CD8-positive, alpha-beta T cell (primary cell): ENCODE measurements at regions of chr10 and their contacts with region 1.

Region 1: DNA sequence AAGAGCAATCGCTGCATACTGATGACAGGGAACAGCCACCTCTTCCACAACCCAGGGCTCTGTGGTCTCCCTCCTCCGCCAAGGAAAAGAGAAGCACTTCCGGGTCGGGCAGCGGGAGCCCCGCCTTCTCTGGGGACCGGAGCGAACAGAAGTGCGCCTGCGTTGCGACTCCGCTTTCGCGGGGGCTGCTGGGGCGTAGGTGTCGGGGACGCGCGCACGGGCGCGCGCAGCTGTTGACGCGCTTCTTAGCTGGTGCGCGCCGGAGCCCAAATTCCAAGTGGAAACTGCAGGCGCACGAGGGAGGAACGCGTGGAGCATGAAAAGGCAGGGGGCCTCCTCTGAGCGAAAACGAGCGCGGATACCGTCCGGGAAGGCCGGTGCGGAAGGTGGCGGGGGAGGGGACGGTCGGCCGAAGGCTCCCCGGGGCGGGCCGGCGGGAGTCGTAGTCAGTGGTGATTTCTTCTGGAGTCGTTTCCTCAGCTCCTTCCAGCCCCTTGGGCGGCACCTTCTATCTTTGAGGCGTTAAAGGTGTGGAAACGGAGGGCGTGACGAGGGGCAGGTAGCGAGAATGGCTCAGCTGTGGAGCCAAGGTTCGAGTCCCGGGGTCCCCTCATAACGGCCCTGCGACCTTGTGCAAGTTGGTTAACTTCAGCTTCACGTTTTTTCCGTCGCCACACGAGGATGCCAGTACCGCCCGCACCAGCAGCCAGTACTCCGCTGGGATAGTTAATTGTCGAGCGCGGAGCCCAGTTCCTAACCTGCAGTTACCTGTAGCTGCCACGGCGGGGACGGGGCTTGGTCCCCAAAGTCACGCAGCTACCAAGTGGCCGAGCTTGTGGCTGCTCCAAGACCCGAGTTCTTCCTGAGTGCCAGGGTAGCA is at the starts of genes COX15 and CUTC:
- DNase-seq: peak; percentile 89 to 98 (median 95)
- ATAC-seq: peak; percentile 89
- H3K4me3 ChIP-seq: peak within 1 kb of the TSS; percentile 85 to 96
- H3K4me3 Mint-ChIP-seq: peak within 1 kb of the TSS; percentile 100
- H3K27ac ChIP-seq: peak within 1 kb of the TSS; percentile 85 to 92
- H3K27ac Mint-ChIP-seq: peak within 1 kb of the TSS; percentile 99
- H3K4me1 ChIP-seq: peaks cover 38% of the 10 kb centered on the region
- H3K4me1 Mint-ChIP-seq: peaks cover 56% of the 10 kb centered on the region
- H3K27me3 ChIP-seq: no peaks in the 10 kb centered on the region
- H3K27me3 Mint-ChIP-seq: no peaks in the 10 kb centered on the region
- CTCF ChIP-seq: peak; percentile 55
- total RNA-seq, gene COX15: 6.8 to 8.1 TPM
- total RNA-seq, gene CUTC: 12.0 to 12.7 TPM

Region 2: GRCh38 chr10:98446661-98447221 is 1285.5 kb before region 1 on chr10 and contains the start of gene HPS1:
- CTCF ChIA-PET with region 1: no interaction called
- POLR2A ChIA-PET with region 1: no interaction called
- intact Hi-C with region 1: loop called in 1 of 2 experiments (anchors 2 kb)
- DNase-seq: peak; percentile 60 to 89 (median 79)
- ATAC-seq: peak; percentile 85
- H3K4me3 ChIP-seq: peak within 1 kb of the TSS; percentile 74 to 91
- H3K4me3 Mint-ChIP-seq: peak within 1 kb of the TSS; percentile 90
- H3K27ac ChIP-seq: peak within 1 kb of the TSS; percentile 81 to 90
- H3K27ac Mint-ChIP-seq: peak within 1 kb of the TSS; percentile 92
- H3K4me1 ChIP-seq: peaks cover 16% of the 10 kb centered on the region
- H3K4me1 Mint-ChIP-seq: peaks cover 45% of the 10 kb centered on the region
- H3K27me3 ChIP-seq: no peaks in the 10 kb centered on the region
- H3K27me3 Mint-ChIP-seq: peaks cover under 1% of the 10 kb centered on the region
- CTCF ChIP-seq: no peak
- total RNA-seq, gene HPS1: 54.1 to 54.3 TPM

Region 3: DNA sequence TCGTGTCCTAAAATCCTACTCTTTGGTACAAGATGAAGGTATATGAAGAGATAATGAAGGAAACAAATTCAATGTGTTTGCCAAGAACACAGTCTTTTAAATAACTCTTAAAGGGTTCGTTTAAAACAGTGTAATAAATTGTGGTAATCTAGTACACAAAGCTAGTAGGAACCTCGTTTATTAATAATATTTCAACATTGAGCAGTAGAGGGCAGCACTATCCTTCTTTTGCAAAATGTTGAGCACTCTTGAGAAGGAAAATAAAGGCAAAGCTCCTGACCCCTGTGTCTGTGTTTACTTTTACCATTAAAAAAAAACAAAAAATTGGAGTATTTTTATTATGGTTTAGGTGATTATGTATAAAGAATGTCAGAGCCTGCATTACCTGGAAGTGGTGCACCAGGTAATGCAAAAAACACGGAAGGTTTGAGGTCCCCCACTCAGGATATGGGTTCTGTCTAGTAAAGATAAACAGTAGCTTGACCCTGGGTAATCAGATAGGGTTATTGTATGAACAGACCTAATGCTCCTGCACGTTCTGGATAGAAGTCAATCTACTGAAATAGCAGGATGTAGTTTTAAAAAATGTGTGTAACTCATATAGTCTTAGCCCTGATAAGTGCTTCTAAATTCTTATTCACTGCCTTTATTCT is 296.2 kb before region 1 on chr10:
- CTCF ChIA-PET with region 1: interaction called, 3 read pairs
- POLR2A ChIA-PET with region 1: no interaction called
- intact Hi-C with region 1: loop called in 1 of 2 experiments (anchors 2 kb)
- DNase-seq: peak in 2 of 9 experiments; percentile 51 to 58
- ATAC-seq: peak; percentile 62
- H3K4me3 ChIP-seq: no peak overlapping the region
- H3K4me3 Mint-ChIP-seq: no peak overlapping the region
- H3K27ac ChIP-seq: no peak overlapping the region
- H3K27ac Mint-ChIP-seq: no peak overlapping the region
- H3K4me1 ChIP-seq: peaks cover 10% of the 10 kb centered on the region
- H3K4me1 Mint-ChIP-seq: peaks cover 25% of the 10 kb centered on the region
- H3K27me3 ChIP-seq: no peaks in the 10 kb centered on the region
- H3K27me3 Mint-ChIP-seq: no peaks in the 10 kb centered on the region
- CTCF ChIP-seq: peak; percentile 80

Region 4: DNA sequence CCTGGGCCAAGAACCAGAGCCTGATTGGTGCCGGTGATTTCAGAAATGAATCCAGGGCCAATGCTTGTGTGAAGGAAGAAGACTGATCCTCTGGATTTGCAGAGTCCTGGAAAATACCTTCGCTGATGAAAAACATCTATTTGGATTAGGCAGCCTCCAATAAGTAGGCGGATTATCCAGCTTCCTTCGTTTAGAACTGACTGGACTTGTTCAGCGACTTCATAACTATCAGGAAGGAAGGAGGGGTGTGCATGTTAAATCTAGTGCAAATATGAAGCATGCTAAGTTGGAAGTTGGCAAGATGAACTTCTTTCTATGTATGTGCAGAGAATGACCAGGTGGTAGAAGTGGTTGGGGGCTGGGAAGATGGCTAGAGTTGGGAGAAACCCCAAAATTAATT is 158.5 kb before region 1 on chr10:
- CTCF ChIA-PET with region 1: no interaction called
- POLR2A ChIA-PET with region 1: no interaction called
- intact Hi-C with region 1: no loop called
- DNase-seq: no peak
- ATAC-seq: no peak
- H3K4me3 ChIP-seq: no peak overlapping the region
- H3K4me3 Mint-ChIP-seq: no peak overlapping the region
- H3K27ac ChIP-seq: no peak overlapping the region
- H3K27ac Mint-ChIP-seq: no peak overlapping the region
- H3K4me1 ChIP-seq: no peaks in the 10 kb centered on the region
- H3K4me1 Mint-ChIP-seq: no peaks in the 10 kb centered on the region
- H3K27me3 ChIP-seq: no peaks in the 10 kb centered on the region
- H3K27me3 Mint-ChIP-seq: peaks cover 17% of the 10 kb centered on the region
- CTCF ChIP-seq: no peak

Region 5: DNA sequence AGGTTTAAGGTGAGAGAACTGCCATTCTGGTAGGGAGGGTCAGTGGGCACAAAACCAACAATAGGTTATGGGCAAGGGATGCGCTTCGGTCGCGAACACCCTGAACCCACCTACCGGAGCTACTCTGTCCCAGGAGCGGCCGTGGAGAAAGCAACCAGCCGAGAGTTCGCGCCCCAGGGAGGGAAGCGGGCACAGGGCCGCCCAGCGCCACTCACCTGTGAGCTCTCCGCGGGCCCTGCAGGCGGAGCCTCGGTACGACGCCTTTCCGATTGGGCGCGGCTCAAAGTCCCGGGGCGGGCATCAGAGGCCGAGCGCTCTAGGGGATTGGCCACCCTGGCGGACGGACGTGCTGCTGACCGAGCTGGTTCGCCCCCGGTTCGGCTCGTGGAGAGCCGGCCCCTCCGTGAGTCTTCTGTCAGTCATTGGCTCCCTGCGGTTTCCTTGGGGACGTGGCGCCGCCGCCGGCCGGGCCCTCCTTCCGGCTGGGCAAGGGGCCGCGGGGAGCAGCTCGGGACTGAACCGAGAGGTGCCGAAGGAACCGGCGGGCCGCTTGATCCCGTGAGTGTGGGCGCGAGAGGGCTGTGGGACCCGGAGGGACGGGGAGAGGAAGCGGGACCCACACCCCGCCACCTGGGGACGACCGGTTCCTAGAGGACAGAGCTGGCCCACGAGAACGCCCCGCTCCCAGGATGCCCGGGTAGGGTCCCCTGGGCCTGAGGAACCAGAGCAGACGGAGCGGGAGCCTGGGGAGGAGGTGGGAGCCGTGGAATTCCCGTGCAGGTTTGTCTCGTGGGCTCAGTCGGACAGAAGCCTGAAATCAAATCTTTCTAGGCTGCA is 73.0 kb before region 1 on chr10 and contains the start of gene ENTPD7:
- CTCF ChIA-PET with region 1: no interaction called
- POLR2A ChIA-PET with region 1: interaction called, 8 read pairs
- intact Hi-C with region 1: loop called (anchors 1 to 5 kb)
- DNase-seq: peak; percentile 70 to 92 (median 88)
- ATAC-seq: peak; percentile 97
- H3K4me3 ChIP-seq: peak within 1 kb of the TSS; percentile 67 to 84
- H3K4me3 Mint-ChIP-seq: peak within 1 kb of the TSS; percentile 85
- H3K27ac ChIP-seq: peak within 1 kb of the TSS; percentile 48 to 56
- H3K27ac Mint-ChIP-seq: peak within 1 kb of the TSS; percentile 47
- H3K4me1 ChIP-seq: peaks cover 10% of the 10 kb centered on the region
- H3K4me1 Mint-ChIP-seq: peaks cover 22% of the 10 kb centered on the region
- H3K27me3 ChIP-seq: no peaks in the 10 kb centered on the region
- H3K27me3 Mint-ChIP-seq: peaks cover 8% of the 10 kb centered on the region
- CTCF ChIP-seq: no peak
- total RNA-seq, gene ENTPD7: 1.1 to 1.5 TPM

Region 6: GRCh38 chr10:100185364-100186252 is 453.3 kb after region 1 on chr10 and contains the start of gene ERLIN1:
- CTCF ChIA-PET with region 1: no interaction called
- POLR2A ChIA-PET with region 1: no interaction called
- intact Hi-C with region 1: loop called in 1 of 2 experiments (anchors 5 kb)
- DNase-seq: peak; percentile 78 to 95 (median 91)
- ATAC-seq: peak; percentile 93
- H3K4me3 ChIP-seq: peak within 1 kb of the TSS; percentile 68 to 96
- H3K4me3 Mint-ChIP-seq: peak within 1 kb of the TSS; percentile 98
- H3K27ac ChIP-seq: peak within 1 kb of the TSS; percentile 85 to 89
- H3K27ac Mint-ChIP-seq: peak within 1 kb of the TSS; percentile 95
- H3K4me1 ChIP-seq: peaks cover 24% of the 10 kb centered on the region
- H3K4me1 Mint-ChIP-seq: peaks cover 64% of the 10 kb centered on the region
- H3K27me3 ChIP-seq: no peaks in the 10 kb centered on the region
- H3K27me3 Mint-ChIP-seq: no peaks in the 10 kb centered on the region
- CTCF ChIP-seq: no peak
- total RNA-seq, gene ERLIN1: 2.0 to 3.1 TPM

Region 7: DNA sequence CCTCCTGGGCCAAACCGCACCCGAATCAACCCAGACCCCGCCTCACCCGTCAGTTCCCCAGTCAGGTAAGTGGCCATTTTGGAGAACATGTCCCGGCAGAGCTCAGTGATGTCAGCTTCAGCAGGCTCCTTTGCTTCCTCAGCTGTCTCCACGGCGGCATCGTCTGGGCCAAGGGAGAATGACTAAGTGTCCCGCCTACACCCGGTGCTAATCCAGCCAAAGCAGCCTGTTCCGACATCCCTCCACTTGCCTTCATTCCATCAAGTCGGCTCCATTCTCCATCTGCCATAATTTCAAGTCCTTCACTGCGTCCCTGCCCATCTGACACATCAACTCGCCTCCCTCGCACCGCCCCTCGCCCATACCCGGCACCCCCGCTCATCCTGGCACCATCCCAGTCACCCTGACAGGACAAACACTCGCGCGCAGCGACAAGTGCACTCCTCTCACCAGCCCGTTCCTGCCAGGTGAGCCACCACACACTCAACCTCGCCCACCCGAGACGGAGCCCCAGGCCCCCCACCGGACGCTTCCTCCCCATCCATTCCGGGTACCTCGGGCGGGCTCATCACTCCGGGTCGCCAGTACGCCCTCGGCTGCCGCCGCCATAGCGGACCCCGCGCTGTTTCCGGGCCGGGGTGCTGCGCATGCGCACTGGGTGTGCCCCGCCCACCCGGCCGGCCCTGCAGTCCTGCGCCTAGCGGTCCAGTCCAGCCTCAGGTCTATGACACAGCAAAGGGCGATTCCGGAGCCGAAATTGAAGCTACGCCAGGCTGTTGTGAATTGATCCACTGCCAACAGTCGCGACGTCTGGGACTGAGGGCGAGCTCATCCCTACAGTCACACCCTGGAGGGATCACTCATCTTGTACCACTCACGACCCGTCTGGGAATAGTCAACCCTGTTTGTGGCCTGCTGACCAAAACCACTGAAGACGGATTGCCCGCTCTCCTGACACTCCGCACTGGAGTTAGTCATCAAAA is 554.1 kb after region 1 on chr10 and contains the start of gene BLOC1S2:
- CTCF ChIA-PET with region 1: no interaction called
- POLR2A ChIA-PET with region 1: no interaction called
- intact Hi-C with region 1: loop called in 1 of 2 experiments (anchors 5 kb)
- DNase-seq: peak; percentile 66 to 95 (median 84)
- ATAC-seq: peak; percentile 78
- H3K4me3 ChIP-seq: peak within 1 kb of the TSS; percentile 79 to 91
- H3K4me3 Mint-ChIP-seq: peak within 1 kb of the TSS; percentile 100
- H3K27ac ChIP-seq: peak within 1 kb of the TSS; percentile 86 to 87
- H3K27ac Mint-ChIP-seq: peak within 1 kb of the TSS; percentile 100
- H3K4me1 ChIP-seq: peaks cover 24% of the 10 kb centered on the region
- H3K4me1 Mint-ChIP-seq: peaks cover 29% of the 10 kb centered on the region
- H3K27me3 ChIP-seq: no peaks in the 10 kb centered on the region
- H3K27me3 Mint-ChIP-seq: no peaks in the 10 kb centered on the region
- CTCF ChIP-seq: no peak
- total RNA-seq, gene BLOC1S2: 58.4 to 59.7 TPM

Region 8: DNA sequence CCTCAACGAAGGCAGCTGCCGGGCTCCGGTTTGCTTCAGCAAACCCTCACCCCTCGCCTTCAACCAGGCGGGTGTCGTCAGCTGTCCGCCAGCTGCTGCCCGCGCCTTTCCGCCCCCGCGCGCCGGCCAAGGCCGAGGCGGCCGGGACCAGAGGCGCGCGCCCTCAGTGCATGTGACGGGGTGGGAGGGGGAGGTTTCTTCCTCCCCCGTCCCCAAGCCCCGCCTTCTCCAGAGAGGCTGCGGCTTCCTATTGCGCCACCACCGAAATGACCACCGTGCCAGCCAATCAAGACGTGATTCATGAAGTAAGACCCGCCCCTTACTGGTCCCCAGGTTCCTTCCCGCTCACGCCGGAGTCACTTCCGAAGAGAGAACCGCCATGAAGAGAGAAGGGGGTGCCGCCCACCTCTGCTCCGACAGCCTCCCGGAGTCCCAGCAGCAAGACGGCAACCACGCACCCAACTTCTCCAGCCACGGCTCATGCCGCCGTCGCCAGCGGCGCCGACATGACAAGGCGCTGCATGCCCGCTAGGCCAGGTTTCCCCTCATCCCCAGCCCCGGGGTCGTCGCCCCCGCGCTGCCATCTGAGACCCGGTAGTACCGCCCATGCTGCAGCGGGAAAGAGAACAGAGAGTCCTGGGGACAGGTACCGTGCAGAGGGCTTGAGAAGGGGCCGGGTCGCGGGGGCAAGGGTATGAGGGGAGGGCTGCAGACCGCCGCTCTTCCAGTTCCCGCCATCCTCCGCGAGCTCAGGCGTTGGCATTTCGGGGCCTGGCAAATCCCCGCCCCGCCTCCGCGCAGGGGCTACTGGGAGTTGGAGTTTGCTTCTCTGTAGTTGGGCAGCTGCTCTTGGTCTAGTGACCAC is 1180.6 kb after region 1 on chr10 and contains the start of gene SLF2:
- CTCF ChIA-PET with region 1: no interaction called
- POLR2A ChIA-PET with region 1: no interaction called
- intact Hi-C with region 1: loop called (anchors 5 to 10 kb)
- DNase-seq: peak; percentile 75 to 96 (median 89)
- ATAC-seq: peak; percentile 84
- H3K4me3 ChIP-seq: peak within 1 kb of the TSS; percentile 98 to 100
- H3K4me3 Mint-ChIP-seq: peak within 1 kb of the TSS; percentile 99
- H3K27ac ChIP-seq: peak within 1 kb of the TSS; percentile 67 to 79
- H3K27ac Mint-ChIP-seq: peak within 1 kb of the TSS; percentile 98
- H3K4me1 ChIP-seq: peaks cover 21% of the 10 kb centered on the region
- H3K4me1 Mint-ChIP-seq: peaks cover 48% of the 10 kb centered on the region
- H3K27me3 ChIP-seq: no peaks in the 10 kb centered on the region
- H3K27me3 Mint-ChIP-seq: no peaks in the 10 kb centered on the region
- CTCF ChIP-seq: no peak
- total RNA-seq, gene SLF2: 8.0 to 8.3 TPM